Heart left ventricle (tissue), 16 donors: ENCODE measurements at regions of chr17 and their contacts with region 1.

Region 1: DNA sequence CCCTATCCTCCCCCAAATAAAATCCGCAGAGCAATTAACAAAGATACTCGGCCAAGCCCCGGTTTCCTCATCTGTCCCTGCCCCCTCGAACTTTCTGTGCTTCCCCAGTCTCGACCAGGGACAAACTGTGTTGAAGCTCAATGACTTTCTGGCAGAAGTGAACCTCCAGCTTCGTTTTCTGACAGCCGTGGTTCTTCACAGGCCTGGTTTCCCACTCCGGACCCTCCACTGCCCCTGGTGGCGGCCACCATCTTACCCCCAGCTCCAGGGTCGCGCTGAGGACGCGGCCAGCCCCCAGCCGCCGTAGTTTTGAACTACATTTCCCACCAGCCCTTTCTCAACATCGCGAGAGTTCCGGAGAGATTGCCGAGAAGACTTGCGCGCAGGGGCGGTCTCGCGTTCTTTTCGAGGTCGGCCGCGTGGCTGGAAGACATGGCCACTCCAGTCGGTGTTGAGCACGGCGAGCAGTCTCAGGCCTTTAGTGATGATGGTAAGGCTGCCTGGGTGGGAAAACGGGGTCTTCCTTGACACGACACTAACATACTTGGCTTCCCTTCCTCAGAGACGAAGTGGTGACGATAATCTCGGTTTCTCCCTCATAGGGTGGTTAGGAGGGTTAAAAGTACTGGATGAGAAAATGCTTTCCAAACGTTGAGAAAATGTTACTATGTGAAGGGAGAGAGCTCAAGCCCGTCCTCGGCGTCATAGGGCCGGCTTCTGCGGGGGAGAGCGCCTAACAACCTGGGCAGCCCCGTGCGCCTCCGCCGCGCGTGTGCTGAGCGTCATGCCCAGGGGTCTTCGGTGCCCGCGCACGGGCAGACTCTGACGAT is 17.7 kb downstream of the PRCD start:
- DNase-seq: peak; percentile 94 to 96 (median 95)
- ATAC-seq: peak; percentile 76 to 92 (median 92)
- H3K4me3 ChIP-seq: peak overlapping the region; percentile 54 to 88 (median 73)
- H3K27ac ChIP-seq: peak overlapping the region; percentile 74 to 95 (median 84)
- H3K4me1 ChIP-seq: peaks cover 5 to 61% (median 48%) of the 10 kb centered on the region in 12 donors
- H3K27me3 ChIP-seq: no peaks in the 10 kb centered on the region
- CTCF ChIP-seq: peak; percentile 33 to 70 (median 49)
- POLR2A ChIP-seq: peak in 1 of 2 donors; percentile 77

Region 2: GRCh38 chr17:76314392-76315227 is 243.0 kb before region 1 on chr17:
- intact Hi-C with region 1: no loop called
- DNase-seq: peak in 1 of 5 donors; percentile 38
- ATAC-seq: peak; percentile 47 to 90 (median 64)
- H3K4me3 ChIP-seq: peak overlapping the region in 5 of 12 donors; percentile 11 to 40 (median 14)
- H3K27ac ChIP-seq: peak overlapping the region in 10 of 12 donors; percentile 17 to 71 (median 68)
- H3K4me1 ChIP-seq: peaks cover 0 to 10% (median 0%) of the 10 kb centered on the region in 12 donors
- H3K27me3 ChIP-seq: no peaks in the 10 kb centered on the region
- CTCF ChIP-seq: no peak
- POLR2A ChIP-seq: no peak

Region 3: DNA sequence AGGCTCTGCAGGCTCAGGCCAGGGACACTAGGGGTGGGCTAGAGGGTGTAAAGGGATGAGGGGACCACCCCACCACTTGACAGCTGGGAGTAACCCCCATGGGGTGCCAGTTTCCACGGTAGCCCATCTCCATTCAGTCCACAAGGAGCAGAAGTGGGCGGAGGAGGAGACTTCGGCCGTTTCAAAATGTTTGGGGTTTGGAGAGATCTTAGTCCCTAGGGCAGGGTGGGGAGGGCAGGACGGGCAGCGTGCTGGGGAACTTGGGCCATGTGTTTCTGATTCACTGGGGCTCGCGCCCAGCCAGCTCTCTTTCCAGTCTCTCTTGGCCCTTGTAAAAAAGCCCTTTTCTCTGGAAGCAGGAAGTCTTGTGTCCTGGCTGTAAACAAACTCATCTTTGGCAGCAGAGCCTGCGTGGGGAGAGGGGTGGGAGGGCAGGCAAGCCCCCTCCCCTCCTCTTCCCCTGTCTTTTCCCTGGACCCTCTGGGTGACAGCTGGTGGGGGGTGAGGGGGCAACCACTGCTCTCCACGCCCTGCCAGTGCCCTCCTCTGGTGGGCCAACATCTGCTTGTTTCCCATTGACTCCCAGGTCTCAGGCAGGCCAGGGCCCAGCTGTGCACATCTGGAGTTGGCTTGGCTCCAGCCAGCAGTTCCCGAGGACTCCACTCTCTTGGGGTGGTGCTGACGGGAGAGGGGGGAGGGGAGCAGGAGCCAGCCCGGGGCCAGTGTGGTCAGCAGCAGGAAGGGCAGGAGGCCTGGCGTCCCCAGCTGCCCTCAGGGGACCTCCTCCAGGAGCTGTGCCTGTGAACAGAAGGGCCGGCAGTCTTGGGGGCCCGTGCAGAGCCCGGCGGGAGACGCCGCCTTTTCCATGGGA is 28.1 kb before region 1 on chr17:
- intact Hi-C with region 1: no loop called
- DNase-seq: peak; percentile 92 to 95 (median 95)
- ATAC-seq: peak; percentile 76 to 80 (median 78)
- H3K4me3 ChIP-seq: peak overlapping the region in 3 of 12 donors; percentile 1 to 29 (median 4)
- H3K27ac ChIP-seq: peak overlapping the region; percentile 89 to 99 (median 95)
- H3K4me1 ChIP-seq: peaks cover 16 to 74% (median 55%) of the 10 kb centered on the region in 12 donors
- H3K27me3 ChIP-seq: no peaks in the 10 kb centered on the region
- CTCF ChIP-seq: peak in 2 of 12 donors; percentile 6 to 8
- POLR2A ChIP-seq: no peak

Region 4: GRCh38 chr17:76623271-76624146 is 65.9 kb after region 1 on chr17:
- intact Hi-C with region 1: loop called in 6 of 10 experiments (anchors 1 to 5 kb)
- DNase-seq: peak; percentile 61 to 90 (median 72)
- ATAC-seq: peak; percentile 47 to 95 (median 90)
- H3K4me3 ChIP-seq: no peak overlapping the region
- H3K27ac ChIP-seq: no peak overlapping the region
- H3K4me1 ChIP-seq: peaks cover 0 to 7% (median 0%) of the 10 kb centered on the region in 12 donors
- H3K27me3 ChIP-seq: no peaks in the 10 kb centered on the region
- CTCF ChIP-seq: peak; percentile 93 to 98 (median 96)
- POLR2A ChIP-seq: no peak

Region 5: DNA sequence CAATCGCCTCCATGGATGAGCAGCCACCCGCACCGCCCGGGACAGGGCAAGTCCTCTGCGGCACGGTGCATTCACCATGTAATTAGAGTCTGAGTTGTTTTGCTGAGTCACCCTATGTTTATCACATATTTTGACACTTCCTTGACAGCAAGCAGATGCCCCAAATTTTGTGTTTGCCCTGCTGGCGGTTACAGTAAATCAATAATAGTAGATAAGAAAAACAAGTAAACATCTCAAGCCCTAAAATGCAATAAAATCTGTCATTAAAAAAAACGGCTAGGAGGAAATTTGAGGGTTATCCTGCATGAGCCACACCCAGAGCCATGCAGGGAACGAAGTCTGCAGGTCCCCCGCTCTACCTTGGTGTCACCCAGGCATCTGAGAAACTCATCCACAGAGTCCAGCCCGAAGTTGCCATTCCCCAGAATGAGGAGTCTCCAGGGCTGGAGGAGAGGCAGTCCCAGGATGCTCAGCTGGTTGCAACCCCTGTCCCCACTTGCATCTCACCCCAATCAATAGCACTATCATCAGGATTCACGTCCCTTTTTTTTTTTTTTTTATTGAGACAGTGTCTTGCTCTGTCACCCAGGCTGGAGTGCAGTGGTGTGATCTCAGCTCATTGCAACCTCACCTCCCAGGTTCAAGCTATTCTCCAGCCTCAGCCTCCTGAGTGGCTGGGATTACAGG is 102.5 kb after region 1 on chr17:
- intact Hi-C with region 1: loop called in 1 of 10 experiments (anchors 10 kb)
- DNase-seq: peak in 1 of 5 donors; percentile 33
- ATAC-seq: peak; percentile 34 to 84 (median 62)
- H3K4me3 ChIP-seq: no peak overlapping the region
- H3K27ac ChIP-seq: peak overlapping the region in 3 of 12 donors; percentile 12 to 17 (median 16)
- H3K4me1 ChIP-seq: peaks cover 0 to 23% (median 18%) of the 10 kb centered on the region in 12 donors
- H3K27me3 ChIP-seq: no peaks in the 10 kb centered on the region
- CTCF ChIP-seq: no peak
- POLR2A ChIP-seq: no peak

Region 6: GRCh38 chr17:76671123-76671911 is 113.7 kb after region 1 on chr17:
- intact Hi-C with region 1: loop called in 4 of 10 experiments (anchors 5 to 10 kb)
- DNase-seq: peak; percentile 100
- ATAC-seq: peak; percentile 98 to 99 (median 98)
- H3K4me3 ChIP-seq: peak overlapping the region; percentile 46 to 79 (median 69)
- H3K27ac ChIP-seq: peak overlapping the region; percentile 47 to 95 (median 90)
- H3K4me1 ChIP-seq: peaks cover 0 to 26% (median 14%) of the 10 kb centered on the region in 12 donors
- H3K27me3 ChIP-seq: no peaks in the 10 kb centered on the region
- CTCF ChIP-seq: no peak
- POLR2A ChIP-seq: no peak

Region 7: GRCh38 chr17:76681222-76682137 is 123.9 kb after region 1 on chr17:
- intact Hi-C with region 1: loop called in 2 of 10 experiments (anchors 5 to 10 kb)
- DNase-seq: peak; percentile 69 to 82 (median 73)
- ATAC-seq: peak; percentile 52 to 71 (median 60)
- H3K4me3 ChIP-seq: peak overlapping the region in 2 of 12 donors; percentile 1 to 3
- H3K27ac ChIP-seq: peak overlapping the region; percentile 36 to 99 (median 89)
- H3K4me1 ChIP-seq: peaks cover 14 to 61% (median 51%) of the 10 kb centered on the region in 12 donors
- H3K27me3 ChIP-seq: no peaks in the 10 kb centered on the region
- CTCF ChIP-seq: peak; percentile 53 to 84 (median 74)
- POLR2A ChIP-seq: no peak

Region 8: GRCh38 chr17:76726231-76726775 is 168.7 kb after region 1 on chr17 and contains the start of gene JMJD6:
- intact Hi-C with region 1: loop called in 3 of 10 experiments (anchors 5 to 10 kb)
- DNase-seq: peak; percentile 97 to 98 (median 98)
- ATAC-seq: peak; percentile 93 to 96 (median 95)
- H3K4me3 ChIP-seq: peak within 1 kb of the TSS; percentile 71 to 99 (median 88)
- H3K27ac ChIP-seq: peak within 1 kb of the TSS; percentile 96 to 100 (median 98)
- H3K4me1 ChIP-seq: peaks cover 6 to 73% (median 51%) of the 10 kb centered on the region in 12 donors
- H3K27me3 ChIP-seq: no peaks in the 10 kb centered on the region
- CTCF ChIP-seq: no peak
- POLR2A ChIP-seq: peak; percentile 53 to 90
- total RNA-seq, gene JMJD6: 32.4 to 67.0 (median 39.1) TPM